GM12878 (cell line): ENCODE measurements at regions of chr2 and their contacts with region 1.

Region 1: DNA sequence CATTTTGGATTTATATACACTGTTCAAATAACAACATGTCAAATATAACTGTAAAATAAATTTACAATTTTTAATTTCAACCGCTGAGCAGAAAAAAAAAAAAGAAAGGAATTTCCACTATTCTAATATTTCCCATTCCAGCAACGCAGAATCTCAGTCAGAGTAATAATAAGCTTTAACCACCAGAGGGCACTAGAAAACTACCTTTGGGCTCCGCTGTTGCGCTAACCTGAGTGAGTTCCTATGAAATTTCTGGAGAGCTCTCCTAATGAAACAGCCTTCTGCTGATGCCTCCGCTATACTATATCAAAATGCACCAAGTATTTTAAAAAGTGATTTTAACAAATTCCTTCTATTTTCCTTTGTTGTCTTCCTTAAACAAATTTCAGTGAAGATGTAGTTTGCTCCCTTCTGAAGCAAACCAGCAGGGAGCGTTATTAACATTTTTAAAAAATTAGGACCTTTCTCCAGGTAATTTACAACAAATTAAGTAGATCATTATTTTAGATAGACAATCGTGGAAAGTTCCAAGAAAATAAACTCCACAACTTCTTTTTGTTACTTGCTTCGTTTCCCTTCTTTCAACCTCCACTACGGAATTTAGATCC is 23.0 kb downstream of the ERMN start:
- DNase-seq: peak; percentile 21
- ATAC-seq: peak; percentile 82
- H3K4me3 ChIP-seq: no peak overlapping the region
- H3K27ac ChIP-seq: no peak overlapping the region
- H3K4me1 ChIP-seq: no peaks in the 10 kb centered on the region
- H3K27me3 ChIP-seq: peaks cover 0 to 2% of the 10 kb centered on the region in 2 experiments; a peak in 2 of 4 replicates
- CTCF ChIP-seq: peak; percentile 55 to 71 (median 62)
- EP300 ChIP-seq: no peak
- POLR2A ChIP-seq: no peak
- RAD21 ChIP-seq: peak; percentile 93

Region 2: GRCh38 chr2:156695020-156695419 is 607.6 kb before region 1 on chr2:
- CTCF ChIA-PET with region 1: no interaction called
- POLR2A ChIA-PET with region 1: no interaction called
- RAD21 ChIA-PET with region 1: no interaction called
- SMC1A ChIA-PET with region 1: no interaction called
- in situ Hi-C with region 1: no loop called
- intact Hi-C with region 1: no loop called
- DNase-seq: no peak
- ATAC-seq: no peak
- H3K4me3 ChIP-seq: no peak overlapping the region
- H3K27ac ChIP-seq: no peak overlapping the region
- H3K4me1 ChIP-seq: no peaks in the 10 kb centered on the region
- H3K27me3 ChIP-seq: no peaks in the 10 kb centered on the region
- CTCF ChIP-seq: no peak
- EP300 ChIP-seq: no peak
- POLR2A ChIP-seq: no peak
- RAD21 ChIP-seq: no peak

Region 3: DNA sequence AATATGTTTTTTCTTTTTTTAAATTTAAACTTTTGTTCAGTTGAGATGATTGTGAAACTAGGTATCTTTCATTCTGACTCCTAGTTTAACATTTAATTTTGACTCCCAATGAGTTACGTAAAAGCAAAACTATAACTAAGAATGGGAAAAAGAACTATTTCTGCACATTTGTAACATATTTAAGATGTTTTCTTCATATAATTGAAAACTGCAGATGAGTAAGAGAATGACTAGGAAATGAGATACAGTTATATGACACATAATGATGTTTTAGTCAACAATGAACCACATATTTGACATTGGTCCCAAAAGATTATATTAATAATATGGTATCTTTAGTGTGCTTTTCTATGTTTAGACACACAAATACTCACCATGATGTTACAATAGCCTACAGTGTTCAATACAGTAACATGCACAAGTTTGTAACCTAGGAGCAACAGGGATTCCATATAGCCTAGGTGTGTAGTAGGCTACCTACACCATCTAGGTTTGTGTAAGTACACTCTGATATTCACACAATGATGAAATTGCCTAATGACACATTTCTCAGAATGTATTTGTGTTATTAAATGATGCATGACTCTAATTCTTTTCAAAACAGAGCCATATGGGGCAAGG is 10.4 kb after region 1 on chr2:
- CTCF ChIA-PET with region 1: interaction called, 59 read pairs
- POLR2A ChIA-PET with region 1: no interaction called
- RAD21 ChIA-PET with region 1: interaction called, 12 read pairs
- SMC1A ChIA-PET with region 1: interaction called, 10 read pairs
- in situ Hi-C with region 1: no loop called
- intact Hi-C with region 1: no loop called
- DNase-seq: no peak
- ATAC-seq: peak; percentile 68
- H3K4me3 ChIP-seq: no peak overlapping the region
- H3K27ac ChIP-seq: no peak overlapping the region
- H3K4me1 ChIP-seq: no peaks in the 10 kb centered on the region
- H3K27me3 ChIP-seq: no peaks in the 10 kb centered on the region
- CTCF ChIP-seq: no peak
- EP300 ChIP-seq: no peak
- POLR2A ChIP-seq: no peak
- RAD21 ChIP-seq: no peak

Region 4: DNA sequence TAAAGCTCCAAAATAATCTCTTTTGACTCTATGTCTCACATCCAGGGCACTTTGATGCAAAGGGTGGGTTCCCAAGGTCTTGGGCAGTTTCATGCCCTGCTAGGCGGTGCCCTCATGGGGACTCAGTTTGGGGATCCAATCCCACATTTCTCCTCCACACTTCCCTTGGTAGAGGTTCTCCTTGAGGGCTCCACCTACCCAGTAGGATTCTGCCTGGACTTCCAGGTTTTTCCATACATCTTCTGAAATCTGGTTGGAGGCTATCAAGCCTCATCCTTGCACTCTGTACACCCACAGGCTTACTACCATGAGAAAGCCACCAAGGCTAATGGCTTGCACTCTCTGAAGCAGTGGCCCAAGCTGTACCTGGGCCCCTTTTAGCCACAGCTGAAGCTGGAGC is 72.8 kb after region 1 on chr2:
- CTCF ChIA-PET with region 1: no interaction called
- POLR2A ChIA-PET with region 1: no interaction called
- RAD21 ChIA-PET with region 1: no interaction called
- SMC1A ChIA-PET with region 1: no interaction called
- in situ Hi-C with region 1: no loop called
- intact Hi-C with region 1: no loop called
- DNase-seq: no peak
- ATAC-seq: no peak
- H3K4me3 ChIP-seq: no peak overlapping the region
- H3K27ac ChIP-seq: no peak overlapping the region
- H3K4me1 ChIP-seq: no peaks in the 10 kb centered on the region
- H3K27me3 ChIP-seq: no peaks in the 10 kb centered on the region
- CTCF ChIP-seq: no peak
- EP300 ChIP-seq: no peak
- POLR2A ChIP-seq: no peak
- RAD21 ChIP-seq: no peak

Region 5: GRCh38 chr2:157404363-157404762 is 101.8 kb after region 1 on chr2:
- CTCF ChIA-PET with region 1: interaction called, 5 read pairs
- POLR2A ChIA-PET with region 1: no interaction called
- RAD21 ChIA-PET with region 1: no interaction called
- SMC1A ChIA-PET with region 1: interaction called, 11 read pairs
- in situ Hi-C with region 1: no loop called
- intact Hi-C with region 1: no loop called
- DNase-seq: peak; percentile 85
- ATAC-seq: peak; percentile 99
- H3K4me3 ChIP-seq: no peak overlapping the region
- H3K27ac ChIP-seq: no peak overlapping the region; the same call in 1 of the 2 replicates
- H3K4me1 ChIP-seq: peaks cover 7% of the 10 kb centered on the region
- H3K27me3 ChIP-seq: no peaks in the 10 kb centered on the region
- CTCF ChIP-seq: no peak
- EP300 ChIP-seq: peak; percentile 87 to 92
- POLR2A ChIP-seq: no peak
- RAD21 ChIP-seq: 0 out of 2 replicates have a peak, but pooled peaks have one; percentile 17

Region 6: DNA sequence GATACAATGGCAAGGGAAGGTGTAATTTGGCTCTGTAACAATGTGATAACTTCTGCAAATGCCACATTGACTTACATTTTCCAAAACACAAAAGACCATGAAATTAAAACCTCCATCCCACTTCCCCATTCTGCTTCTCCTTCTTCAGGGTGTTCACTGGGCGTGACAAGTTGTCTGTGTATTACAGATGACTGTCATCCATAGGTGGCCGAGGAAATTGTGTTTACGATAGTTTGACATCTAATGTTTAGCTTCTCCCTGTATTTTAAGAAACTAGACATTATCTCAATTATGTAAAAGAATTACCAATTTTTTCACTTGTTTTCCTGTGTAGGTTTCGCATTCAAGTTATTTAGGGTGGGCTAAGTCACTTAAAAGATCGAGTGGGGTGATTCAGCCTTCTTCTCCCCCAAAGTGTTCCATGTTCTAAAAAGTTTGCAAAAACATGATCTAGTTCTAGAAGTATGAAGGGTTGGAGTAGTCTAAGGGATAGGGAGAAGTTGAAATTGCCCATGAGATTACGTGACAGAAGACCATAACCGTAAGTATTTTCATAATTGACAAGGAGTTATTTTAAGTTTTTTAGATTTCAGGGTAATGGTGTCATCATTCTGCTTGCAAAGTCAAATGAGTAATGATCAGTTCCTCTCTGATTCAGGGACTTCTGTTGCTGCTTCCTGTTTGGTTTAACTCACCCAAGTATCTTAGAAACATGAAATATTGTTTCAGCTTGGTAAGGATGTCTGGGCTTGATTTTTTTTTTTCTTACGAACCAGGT is 166.5 kb after region 1 on chr2:
- CTCF ChIA-PET with region 1: interaction called, 12 read pairs
- POLR2A ChIA-PET with region 1: no interaction called
- RAD21 ChIA-PET with region 1: interaction called, 7 read pairs
- SMC1A ChIA-PET with region 1: interaction called, 8 read pairs
- in situ Hi-C with region 1: no loop called
- intact Hi-C with region 1: no loop called
- DNase-seq: peak; percentile 95
- ATAC-seq: peak; percentile 78
- H3K4me3 ChIP-seq: peak overlapping the region; percentile 46; the same call in 1 of the 2 replicates
- H3K27ac ChIP-seq: peak overlapping the region; percentile 98
- H3K4me1 ChIP-seq: peaks cover 38% of the 10 kb centered on the region
- H3K27me3 ChIP-seq: no peaks in the 10 kb centered on the region
- CTCF ChIP-seq: no peak
- EP300 ChIP-seq: peak; percentile 100
- POLR2A ChIP-seq: no peak
- RAD21 ChIP-seq: peak; percentile 22; the same call in 1 of the 2 replicates

Region 7: DNA sequence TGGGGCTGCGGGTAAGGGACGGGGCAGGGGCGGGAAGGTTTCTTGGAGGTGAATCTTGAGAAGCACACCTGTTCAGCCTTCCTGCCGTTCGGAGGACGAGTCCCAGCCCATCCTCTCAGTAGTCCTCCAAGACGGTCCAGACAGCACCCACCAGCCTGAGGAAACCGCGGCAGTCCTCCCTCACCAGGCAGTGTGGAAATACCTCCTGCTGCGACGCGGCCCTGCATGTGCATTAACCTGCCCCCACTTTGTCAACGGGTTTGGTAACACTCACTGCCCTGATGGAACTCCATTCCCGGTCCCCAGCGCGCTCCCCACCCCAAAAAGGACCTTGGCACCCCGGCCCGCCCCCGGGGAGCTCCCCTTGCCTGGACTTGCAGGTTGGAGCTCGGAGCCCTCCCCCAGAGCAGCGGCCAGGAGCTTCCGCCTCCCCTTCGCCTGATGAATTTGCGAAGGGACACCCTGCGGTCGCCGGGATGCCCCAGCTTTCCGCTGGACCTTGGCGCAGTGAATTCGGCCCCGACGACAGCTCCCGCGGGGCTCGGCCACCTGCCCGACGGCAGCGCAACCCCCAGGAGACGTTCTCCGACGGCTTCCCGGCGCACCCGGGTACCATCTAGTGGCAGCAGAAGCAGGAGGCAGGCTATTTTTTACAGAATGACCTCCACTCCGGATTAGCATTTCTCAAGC is 294.5 kb after region 1 on chr2:
- CTCF ChIA-PET with region 1: interaction called, 90 read pairs
- POLR2A ChIA-PET with region 1: interaction called, 3 read pairs
- RAD21 ChIA-PET with region 1: interaction called, 8 read pairs
- SMC1A ChIA-PET with region 1: interaction called, 16 read pairs
- in situ Hi-C with region 1: loop called (anchors 5 kb)
- intact Hi-C with region 1: loop called (anchors 1 kb)
- DNase-seq: no peak
- ATAC-seq: peak; percentile 78
- H3K4me3 ChIP-seq: no peak overlapping the region
- H3K27ac ChIP-seq: no peak overlapping the region
- H3K4me1 ChIP-seq: no peaks in the 10 kb centered on the region
- H3K27me3 ChIP-seq: no peaks in the 10 kb centered on the region
- CTCF ChIP-seq: peak; percentile 42 to 53 (median 52); a peak in 5 of 6 replicates
- EP300 ChIP-seq: no peak
- POLR2A ChIP-seq: no peak
- RAD21 ChIP-seq: peak; percentile 46

Region 8: DNA sequence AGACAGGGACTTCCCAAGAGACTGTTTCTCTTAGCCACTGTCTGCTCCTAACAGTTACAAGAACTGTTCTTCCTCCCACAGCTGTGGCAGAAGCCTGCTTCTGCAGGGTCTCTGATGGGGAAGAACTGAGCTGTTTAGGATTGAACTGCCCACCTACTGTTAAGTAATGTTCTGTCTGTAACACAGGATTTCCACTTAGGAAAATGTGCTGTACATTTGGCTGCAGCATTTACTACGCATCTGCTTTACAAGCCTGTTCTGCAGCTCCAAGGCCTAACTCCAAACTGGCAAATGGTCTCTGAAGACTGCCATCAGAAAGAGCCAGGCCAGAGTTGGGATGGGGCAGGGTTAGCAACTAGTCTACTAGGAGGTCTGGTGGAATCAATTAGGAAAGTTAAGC is 711.3 kb after region 1 on chr2:
- CTCF ChIA-PET with region 1: interaction called, 71 read pairs
- POLR2A ChIA-PET with region 1: no interaction called
- RAD21 ChIA-PET with region 1: interaction called, 10 read pairs
- SMC1A ChIA-PET with region 1: interaction called, 43 read pairs
- in situ Hi-C with region 1: loop called (anchors 5 kb)
- intact Hi-C with region 1: loop called (anchors 1 kb)
- DNase-seq: no peak
- ATAC-seq: peak; percentile 23; the same call in 2 of the 3 replicates
- H3K4me3 ChIP-seq: no peak overlapping the region
- H3K27ac ChIP-seq: no peak overlapping the region
- H3K4me1 ChIP-seq: no peaks in the 10 kb centered on the region
- H3K27me3 ChIP-seq: peaks cover 0 to 3% of the 10 kb centered on the region in 2 experiments; a peak in 1 of 4 replicates
- CTCF ChIP-seq: no peak
- EP300 ChIP-seq: no peak
- POLR2A ChIP-seq: no peak
- RAD21 ChIP-seq: no peak